Dendritic cell treated with granulocyte-macrophage colony-stimulating factor and Interleukin-4, amounts not matched to agents 40 ng/mL and 50 ng/mL, for 4 days (primary cell): ENCODE measurements at regions of chr13 and their contacts with region 1.

Region 1: DNA sequence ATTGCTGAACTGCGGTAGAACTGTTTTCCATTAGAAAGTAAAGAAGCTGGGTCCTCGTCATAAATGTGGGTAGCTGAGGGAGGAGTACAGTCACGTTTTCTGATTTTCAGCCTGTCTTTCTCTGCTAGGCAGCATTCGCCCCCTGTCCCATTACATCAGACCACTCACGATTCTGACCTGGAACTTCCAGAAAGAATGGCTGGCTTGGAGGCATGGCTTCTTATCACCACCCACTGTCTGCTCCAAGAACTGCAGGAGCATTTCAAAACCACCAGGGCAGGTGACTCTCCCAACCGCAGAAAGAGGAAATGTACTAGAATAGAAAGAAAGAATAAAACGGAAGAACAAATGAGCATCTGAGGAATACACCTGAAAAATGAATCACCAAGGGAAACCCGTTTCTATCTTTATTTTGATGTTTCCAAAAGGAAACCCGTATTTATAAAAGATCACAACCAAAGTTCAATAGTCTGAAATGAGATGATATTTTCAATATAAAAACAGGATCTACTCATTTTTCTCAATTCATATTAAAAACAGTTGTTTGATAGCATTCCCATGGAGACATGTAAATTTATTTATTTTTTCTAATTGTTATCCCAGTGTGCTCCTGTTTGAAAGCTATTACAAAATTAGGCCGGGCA is 22.1 kb upstream of the POMP start:
- H3K4me3 Mint-ChIP-seq: no peak overlapping the region
- H3K27ac Mint-ChIP-seq: no peak overlapping the region
- H3K4me1 Mint-ChIP-seq: peaks cover 14% of the 10 kb centered on the region
- H3K27me3 Mint-ChIP-seq: peaks cover 20% of the 10 kb centered on the region

Region 2: DNA sequence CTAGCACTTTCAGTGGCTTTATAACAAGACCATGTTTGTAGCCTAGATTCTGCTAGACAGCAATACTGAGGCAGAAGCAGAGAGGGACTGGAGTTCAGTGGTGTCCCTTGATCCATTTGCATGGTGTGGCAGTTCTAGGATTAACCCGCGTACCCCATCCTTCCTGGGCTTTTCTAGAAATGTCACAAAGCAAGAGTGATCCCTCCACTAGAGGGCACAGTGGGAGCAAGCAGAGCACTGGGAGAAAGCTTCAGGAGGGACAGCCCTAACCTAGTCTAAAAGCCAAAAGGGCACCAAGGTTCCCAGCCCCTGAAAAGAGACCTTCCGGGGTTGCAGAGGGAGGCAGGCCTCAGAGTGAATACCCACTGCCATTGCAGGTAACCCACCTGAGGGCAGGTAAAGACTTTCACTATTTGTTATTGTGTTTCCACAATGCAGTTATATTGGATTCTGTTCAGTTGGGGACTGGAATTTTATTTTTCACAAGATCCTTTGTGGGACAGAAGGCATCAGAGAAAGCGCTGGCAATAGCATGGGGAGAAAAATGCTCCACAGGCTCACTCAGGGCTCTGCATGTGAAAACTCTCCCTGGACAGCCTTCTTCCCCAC is 312.5 kb before region 1 on chr13:
- intact Hi-C with region 1: loop called (anchors 2 kb)
- H3K4me3 Mint-ChIP-seq: no peak overlapping the region
- H3K27ac Mint-ChIP-seq: no peak overlapping the region
- H3K4me1 Mint-ChIP-seq: peaks cover 9% of the 10 kb centered on the region
- H3K27me3 Mint-ChIP-seq: peaks cover 60% of the 10 kb centered on the region

Region 3: DNA sequence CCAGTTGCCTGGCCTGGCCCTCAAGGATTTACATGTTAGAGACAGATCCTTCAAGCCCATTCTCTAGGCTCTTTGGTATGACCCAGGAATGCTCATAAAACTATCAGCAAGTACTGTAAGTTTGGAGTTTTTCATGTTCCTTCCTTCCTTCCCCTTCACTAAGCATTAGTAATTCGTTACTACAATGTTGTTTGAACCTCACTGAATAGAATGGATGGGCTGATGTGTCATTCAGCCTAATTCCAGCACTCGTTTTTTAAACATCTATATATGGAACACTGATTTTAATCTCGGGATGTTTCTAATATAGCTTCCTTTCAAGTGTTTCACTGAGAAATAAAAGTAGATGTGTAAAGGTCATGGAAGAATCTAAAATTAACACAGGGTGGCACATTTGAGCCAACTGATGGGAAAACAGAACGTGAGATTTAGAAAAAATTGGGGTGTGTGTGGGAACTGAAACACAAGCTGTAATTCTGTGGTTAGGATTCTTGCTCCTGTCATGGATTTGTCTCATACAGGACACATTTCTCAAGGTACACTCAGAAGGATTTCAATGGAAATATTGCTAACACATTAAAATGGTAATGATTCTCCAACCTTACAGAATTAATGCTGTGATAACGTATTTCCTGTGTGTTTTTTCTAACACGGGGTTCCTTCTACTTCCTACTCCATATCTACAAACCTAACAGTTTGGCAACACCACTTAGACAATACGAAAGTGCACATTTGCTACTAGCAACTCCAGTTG is 235.3 kb before region 1 on chr13:
- intact Hi-C with region 1: loop called (anchors 5 kb)
- H3K4me3 Mint-ChIP-seq: peak overlapping the region; percentile 17
- H3K27ac Mint-ChIP-seq: no peak overlapping the region
- H3K4me1 Mint-ChIP-seq: peaks cover 20% of the 10 kb centered on the region
- H3K27me3 Mint-ChIP-seq: peaks cover 15% of the 10 kb centered on the region

Region 4: GRCh38 chr13:28590461-28590860 is 46.3 kb before region 1 on chr13:
- intact Hi-C with region 1: loop called (anchors 5 kb)
- H3K4me3 Mint-ChIP-seq: no peak overlapping the region
- H3K27ac Mint-ChIP-seq: no peak overlapping the region
- H3K4me1 Mint-ChIP-seq: peaks cover 50% of the 10 kb centered on the region
- H3K27me3 Mint-ChIP-seq: peaks cover 6% of the 10 kb centered on the region

Region 5: DNA sequence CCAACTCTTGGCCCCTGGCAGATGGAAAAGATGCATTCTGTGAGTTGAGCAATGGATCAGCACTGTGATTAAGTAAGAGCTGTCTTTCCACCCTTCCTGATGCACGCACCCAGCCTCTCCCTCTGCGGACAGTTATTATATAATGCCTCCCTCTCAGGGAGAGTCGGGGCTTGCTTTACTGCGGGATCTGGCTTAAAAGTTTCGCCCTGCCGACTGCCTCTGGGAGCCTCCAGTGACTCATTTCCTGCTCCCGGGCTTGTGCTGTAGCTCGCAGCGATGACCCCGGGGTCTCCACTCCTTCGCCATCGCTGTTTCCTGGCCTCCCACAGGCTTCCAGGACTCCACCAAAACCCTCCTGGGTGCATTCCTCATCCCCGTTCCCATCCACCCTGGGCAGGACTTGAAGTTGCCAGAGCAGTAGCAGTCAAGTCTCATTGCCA is 1066.1 kb after region 1 on chr13:
- intact Hi-C with region 1: no loop called
- H3K4me3 Mint-ChIP-seq: no peak overlapping the region
- H3K27ac Mint-ChIP-seq: no peak overlapping the region
- H3K4me1 Mint-ChIP-seq: no peaks in the 10 kb centered on the region
- H3K27me3 Mint-ChIP-seq: peaks cover 22% of the 10 kb centered on the region